CD4-positive, alpha-beta T cell (primary cell): ENCODE measurements at regions of chr6 and their contacts with region 1.

Region 1: DNA sequence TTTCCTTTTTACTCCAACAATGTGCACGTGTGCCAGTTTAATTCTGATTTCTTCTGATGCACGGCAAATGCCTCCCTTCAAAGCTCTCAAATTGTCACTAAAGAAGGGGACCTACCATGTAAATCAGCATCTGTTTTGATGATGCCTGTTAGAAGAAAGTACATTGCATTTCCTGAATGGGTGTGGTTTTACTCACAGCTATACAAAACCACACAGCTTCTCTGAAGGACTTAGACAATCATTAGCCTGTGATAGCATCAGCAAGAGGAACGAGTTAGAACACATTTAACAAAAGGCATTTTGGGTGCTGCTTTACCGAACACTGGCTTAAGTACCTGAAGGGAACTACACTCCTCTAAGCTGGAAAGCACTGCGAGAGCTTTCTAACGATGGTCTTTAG is 109.4 kb downstream of the ATXN1 start:
- DNase-seq: peak in 3 of 14 experiments; percentile 72 to 82 (median 77)
- ATAC-seq: peak; percentile 87
- H3K4me3 ChIP-seq: no peak overlapping the region
- H3K4me3 Mint-ChIP-seq: peak overlapping the region; percentile 62
- H3K27ac ChIP-seq: peak overlapping the region in 1 of 2 donors; percentile 26
- H3K27ac Mint-ChIP-seq: peak overlapping the region; percentile 78
- H3K4me1 ChIP-seq: peaks cover 47% of the 10 kb centered on the region
- H3K4me1 Mint-ChIP-seq: peaks cover 55% of the 10 kb centered on the region
- H3K27me3 ChIP-seq: no peaks in the 10 kb centered on the region
- H3K27me3 Mint-ChIP-seq: no peaks in the 10 kb centered on the region
- CTCF ChIP-seq: no peak

Region 2: GRCh38 chr6:16562498-16562897 is 89.4 kb before region 1 on chr6:
- CTCF ChIA-PET with region 1: no interaction called
- POLR2A ChIA-PET with region 1: no interaction called
- intact Hi-C with region 1: no loop called
- DNase-seq: no peak
- ATAC-seq: no peak
- H3K4me3 ChIP-seq: no peak overlapping the region
- H3K4me3 Mint-ChIP-seq: no peak overlapping the region
- H3K27ac ChIP-seq: no peak overlapping the region
- H3K27ac Mint-ChIP-seq: no peak overlapping the region
- H3K4me1 ChIP-seq: no peaks in the 10 kb centered on the region
- H3K4me1 Mint-ChIP-seq: no peaks in the 10 kb centered on the region
- H3K27me3 ChIP-seq: no peaks in the 10 kb centered on the region
- H3K27me3 Mint-ChIP-seq: no peaks in the 10 kb centered on the region
- CTCF ChIP-seq: no peak

Region 3: GRCh38 chr6:16608444-16608843 is 43.4 kb before region 1 on chr6:
- CTCF ChIA-PET with region 1: no interaction called
- POLR2A ChIA-PET with region 1: no interaction called
- intact Hi-C with region 1: no loop called
- DNase-seq: no peak
- ATAC-seq: no peak
- H3K4me3 ChIP-seq: no peak overlapping the region
- H3K4me3 Mint-ChIP-seq: no peak overlapping the region
- H3K27ac ChIP-seq: no peak overlapping the region
- H3K27ac Mint-ChIP-seq: no peak overlapping the region
- H3K4me1 ChIP-seq: peaks cover 3% of the 10 kb centered on the region
- H3K4me1 Mint-ChIP-seq: peaks cover 6% of the 10 kb centered on the region
- H3K27me3 ChIP-seq: no peaks in the 10 kb centered on the region
- H3K27me3 Mint-ChIP-seq: no peaks in the 10 kb centered on the region
- CTCF ChIP-seq: no peak

Region 4: DNA sequence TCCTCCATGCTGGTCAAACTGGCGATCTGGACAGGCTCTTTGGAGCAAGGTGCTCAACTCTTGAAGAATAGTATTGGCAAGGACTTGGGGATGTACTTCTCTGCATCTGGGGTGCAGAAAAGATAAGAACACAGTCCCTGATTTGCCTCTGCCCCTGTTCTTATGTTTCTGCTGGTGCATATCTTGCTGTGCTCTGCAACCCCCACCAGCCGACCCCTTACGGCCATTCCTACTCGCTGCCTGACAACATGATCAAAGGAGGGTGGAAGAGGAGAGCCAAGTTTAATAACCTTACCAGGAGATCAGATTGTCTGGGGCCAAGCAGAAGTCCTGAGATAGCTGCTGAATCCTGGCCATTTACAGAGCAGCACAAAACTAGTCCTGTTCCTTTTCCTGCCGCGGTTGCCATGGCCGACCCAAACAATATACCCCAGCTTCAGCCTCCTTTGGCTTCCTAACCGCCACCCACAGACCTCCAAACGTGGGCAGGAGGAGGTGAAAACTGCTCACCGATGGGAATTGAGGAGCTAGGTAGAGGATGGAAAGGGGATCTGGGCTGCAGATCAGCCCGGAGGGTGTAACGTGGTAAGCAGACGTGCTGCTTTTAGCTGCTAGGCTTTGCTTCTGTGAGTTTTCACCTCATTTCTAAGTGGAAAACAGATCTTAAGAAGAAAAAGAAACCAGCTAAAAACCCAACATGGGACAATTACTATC is 48.5 kb after region 1 on chr6:
- CTCF ChIA-PET with region 1: no interaction called
- POLR2A ChIA-PET with region 1: interaction called, 10 read pairs
- intact Hi-C with region 1: loop called (anchors 5 kb)
- DNase-seq: peak in 9 of 14 experiments; percentile 14 to 77 (median 27)
- ATAC-seq: peak; percentile 48
- H3K4me3 ChIP-seq: peak overlapping the region; percentile 66
- H3K4me3 Mint-ChIP-seq: peak overlapping the region; percentile 85
- H3K27ac ChIP-seq: peak overlapping the region; percentile 2 to 80
- H3K27ac Mint-ChIP-seq: peak overlapping the region; percentile 68
- H3K4me1 ChIP-seq: peaks cover 49% of the 10 kb centered on the region
- H3K4me1 Mint-ChIP-seq: peaks cover 68% of the 10 kb centered on the region
- H3K27me3 ChIP-seq: no peaks in the 10 kb centered on the region
- H3K27me3 Mint-ChIP-seq: no peaks in the 10 kb centered on the region
- CTCF ChIP-seq: no peak

Region 5: DNA sequence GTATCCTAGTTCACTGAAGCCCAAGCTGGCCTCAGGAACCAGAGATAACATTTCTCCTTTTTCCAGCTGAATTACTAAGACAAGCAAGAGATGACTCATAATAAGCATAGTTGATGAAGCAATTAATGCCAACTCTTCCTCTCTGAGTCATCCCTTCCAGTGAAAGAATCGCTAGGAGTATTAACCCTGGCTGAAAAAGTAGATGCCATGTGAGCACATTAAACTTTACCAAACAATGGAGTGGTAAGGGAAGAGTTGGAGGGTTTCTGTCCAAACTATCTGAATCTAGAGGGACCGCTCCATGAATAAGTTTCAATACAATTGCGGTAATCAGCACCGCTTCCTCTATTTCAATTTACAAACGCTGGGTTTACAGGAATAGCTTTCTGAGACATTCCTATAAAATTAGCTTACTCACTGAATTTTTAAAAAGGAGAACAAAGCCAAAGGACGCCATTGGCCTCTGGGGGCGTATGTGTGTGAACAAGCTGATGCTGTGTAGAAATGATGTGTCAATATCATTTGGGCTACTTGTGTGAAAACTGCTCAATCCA is 61.1 kb after region 1 on chr6:
- CTCF ChIA-PET with region 1: interaction called, 3 read pairs
- POLR2A ChIA-PET with region 1: no interaction called
- intact Hi-C with region 1: loop called (anchors 5 kb)
- DNase-seq: peak in 3 of 14 experiments; percentile 57 to 69 (median 61)
- ATAC-seq: peak; percentile 37
- H3K4me3 ChIP-seq: peak overlapping the region; percentile 36
- H3K4me3 Mint-ChIP-seq: peak overlapping the region; percentile 70
- H3K27ac ChIP-seq: peak overlapping the region; percentile 25 to 54
- H3K27ac Mint-ChIP-seq: peak overlapping the region; percentile 82
- H3K4me1 ChIP-seq: peaks cover 24% of the 10 kb centered on the region
- H3K4me1 Mint-ChIP-seq: peaks cover 32% of the 10 kb centered on the region
- H3K27me3 ChIP-seq: no peaks in the 10 kb centered on the region
- H3K27me3 Mint-ChIP-seq: no peaks in the 10 kb centered on the region
- CTCF ChIP-seq: peak; percentile 11

Region 6: DNA sequence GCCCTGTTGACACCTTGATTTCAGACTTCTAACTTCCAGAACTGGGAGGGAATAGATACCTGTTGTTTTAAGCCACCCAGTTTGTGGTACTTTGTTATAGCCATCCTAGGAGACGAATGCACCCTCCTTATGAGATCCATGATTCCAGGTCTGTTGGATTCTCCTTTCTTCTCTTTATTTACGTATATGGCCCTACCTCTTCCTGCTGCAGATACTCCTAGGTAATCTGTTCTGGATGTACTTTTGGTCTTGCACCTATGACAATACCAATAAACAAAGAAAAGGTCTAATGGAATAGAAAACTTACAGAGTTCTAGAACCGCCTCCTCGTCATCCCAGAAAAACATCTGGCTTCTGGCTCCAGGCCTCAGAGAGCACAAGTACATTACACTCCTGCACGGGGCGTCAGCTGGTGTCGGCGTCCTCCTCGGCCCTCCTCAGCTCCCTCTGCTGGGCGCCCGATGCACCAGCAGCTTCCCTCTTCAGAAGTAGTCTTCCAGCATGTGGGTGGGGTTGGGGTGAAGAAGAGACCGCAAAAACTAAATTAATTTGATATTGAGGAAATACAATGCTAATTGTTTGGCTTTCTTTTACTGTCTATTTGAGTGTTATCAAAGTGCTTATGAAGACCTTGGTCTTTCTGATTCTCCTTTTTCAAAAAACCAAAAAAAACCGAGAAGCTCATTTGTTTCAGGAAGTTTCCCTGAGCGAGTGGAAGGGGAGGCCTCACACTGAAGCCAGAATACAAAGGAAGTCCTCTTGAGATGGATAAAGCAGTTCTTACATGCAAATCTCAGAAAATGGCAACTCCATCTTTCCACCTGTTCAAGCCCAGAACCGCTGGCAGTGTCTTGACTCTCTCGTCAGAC is 119.1 kb after region 1 on chr6:
- CTCF ChIA-PET with region 1: interaction called, 6 read pairs
- POLR2A ChIA-PET with region 1: interaction called, 3 read pairs
- intact Hi-C with region 1: loop called in 1 of 2 experiments (anchors 5 kb)
- DNase-seq: peak; percentile 65 to 90 (median 73)
- ATAC-seq: peak; percentile 79
- H3K4me3 ChIP-seq: no peak overlapping the region
- H3K4me3 Mint-ChIP-seq: no peak overlapping the region
- H3K27ac ChIP-seq: no peak overlapping the region
- H3K27ac Mint-ChIP-seq: peak overlapping the region; percentile 40
- H3K4me1 ChIP-seq: peaks cover 20% of the 10 kb centered on the region
- H3K4me1 Mint-ChIP-seq: peaks cover 45% of the 10 kb centered on the region
- H3K27me3 ChIP-seq: no peaks in the 10 kb centered on the region
- H3K27me3 Mint-ChIP-seq: no peaks in the 10 kb centered on the region
- CTCF ChIP-seq: peak; percentile 96